AG04450 (cell line): ENCODE measurements at regions of chr1 and their contacts with region 1.

Region 1: DNA sequence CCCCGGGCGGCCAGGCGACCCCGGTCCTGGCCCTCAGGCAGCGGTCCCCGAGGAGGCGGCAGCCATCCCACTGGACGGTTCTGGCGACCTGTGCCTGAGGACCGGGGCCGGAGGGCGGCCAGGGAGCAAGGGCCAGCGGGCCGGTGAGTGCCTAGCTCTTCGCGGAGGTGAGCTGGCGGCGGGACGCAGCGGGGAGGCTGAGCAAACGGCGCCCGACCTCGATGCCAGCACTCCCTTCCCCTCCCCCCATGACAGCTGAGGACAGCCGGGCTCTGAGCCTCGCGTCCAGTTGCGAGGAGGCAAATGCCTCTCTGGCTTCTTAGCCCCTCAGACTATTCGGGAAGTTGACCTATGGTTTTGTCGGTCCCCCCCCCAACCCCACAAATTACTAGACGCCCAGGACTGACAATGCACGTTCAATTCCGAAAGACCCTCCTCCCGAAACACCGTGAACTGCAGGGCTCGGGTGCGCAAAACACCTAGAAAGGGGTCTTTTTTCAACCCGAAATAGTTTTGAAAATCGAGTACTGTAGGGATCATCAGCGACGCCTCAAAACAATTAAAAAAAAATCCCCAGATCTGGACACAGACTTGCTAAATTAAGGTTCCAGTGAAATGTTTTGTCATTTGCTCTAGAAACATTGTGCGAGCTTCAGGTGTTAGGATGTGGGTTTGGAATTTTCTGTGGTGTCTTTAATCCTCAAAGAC is 8.3 kb downstream of the CDKN2C start:
- DNase-seq: no peak
- H3K4me3 ChIP-seq: peak overlapping the region; percentile 72
- H3K27ac ChIP-seq: peak overlapping the region; percentile 34
- H3K27me3 ChIP-seq: no peaks in the 10 kb centered on the region
- CTCF ChIP-seq: no peak

Region 2: DNA sequence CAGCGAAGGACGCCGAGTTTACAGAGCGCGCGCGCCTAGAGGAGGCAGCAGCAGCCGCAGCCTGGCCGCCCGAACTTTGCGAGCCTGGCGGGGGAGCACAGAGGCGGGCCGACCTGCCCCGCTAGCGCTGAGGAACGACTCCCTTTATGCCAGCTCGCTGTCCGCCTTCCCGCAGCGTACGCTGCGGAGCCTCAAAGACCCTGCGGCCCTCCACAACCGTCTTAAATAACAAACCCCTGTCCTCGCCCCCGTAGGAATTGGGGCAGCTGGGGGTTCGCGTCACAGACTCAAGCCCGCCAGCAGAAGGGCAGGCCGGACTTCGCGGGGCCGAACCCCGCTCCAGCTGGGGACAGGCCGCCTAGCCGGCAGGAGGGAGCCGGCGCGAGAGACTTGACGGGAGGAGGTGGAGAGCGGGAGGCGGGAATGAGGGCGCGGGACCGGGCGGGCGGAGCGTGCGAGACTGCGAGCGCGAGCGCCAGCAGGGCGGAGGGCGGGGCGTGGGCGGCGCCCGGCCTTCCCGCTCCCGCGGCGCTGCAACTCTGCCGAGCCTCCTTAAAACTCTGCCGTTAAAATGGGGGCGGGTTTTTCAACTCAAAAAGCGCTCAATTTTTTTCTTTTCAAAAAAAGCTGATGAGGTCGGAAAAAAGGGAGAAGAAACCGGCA is 10.0 kb before region 1 on chr1:
- CTCF ChIA-PET with region 1: interaction called, 5 read pairs
- POLR2A ChIA-PET with region 1: interaction called, 13 read pairs
- DNase-seq: peak; percentile 76
- H3K4me3 ChIP-seq: peak overlapping the region; percentile 85
- H3K27ac ChIP-seq: peak overlapping the region; percentile 97
- H3K27me3 ChIP-seq: no peaks in the 10 kb centered on the region
- CTCF ChIP-seq: peak; percentile 45

Region 3: DNA sequence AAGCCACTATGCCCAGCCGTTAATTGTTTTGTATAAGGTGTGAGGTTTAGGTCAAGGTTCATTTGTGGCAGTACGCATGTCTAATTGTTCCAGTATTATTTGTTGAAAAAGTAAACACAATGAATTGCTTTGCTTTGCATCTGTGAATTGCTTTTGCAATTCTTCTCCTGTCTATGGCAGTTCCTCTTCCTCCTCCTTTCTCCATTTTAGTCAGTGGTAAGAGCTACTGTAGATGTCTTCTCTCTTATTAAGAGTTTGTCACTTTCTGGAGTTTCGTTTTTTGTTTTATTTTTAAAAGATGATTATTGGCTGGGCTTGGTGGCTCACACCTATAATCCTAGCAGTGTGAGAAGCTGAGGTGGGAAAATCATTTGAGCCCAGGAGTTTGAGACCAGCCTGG is 152.9 kb after region 1 on chr1:
- CTCF ChIA-PET with region 1: no interaction called
- POLR2A ChIA-PET with region 1: no interaction called
- DNase-seq: no peak
- H3K4me3 ChIP-seq: no peak overlapping the region
- H3K27ac ChIP-seq: no peak overlapping the region
- H3K27me3 ChIP-seq: peaks cover 2% of the 10 kb centered on the region
- CTCF ChIP-seq: no peak